Naive thymus-derived CD4-positive, alpha-beta T cell (primary cell): ENCODE measurements at regions of chr4 and their contacts with region 1.

Region 1: DNA sequence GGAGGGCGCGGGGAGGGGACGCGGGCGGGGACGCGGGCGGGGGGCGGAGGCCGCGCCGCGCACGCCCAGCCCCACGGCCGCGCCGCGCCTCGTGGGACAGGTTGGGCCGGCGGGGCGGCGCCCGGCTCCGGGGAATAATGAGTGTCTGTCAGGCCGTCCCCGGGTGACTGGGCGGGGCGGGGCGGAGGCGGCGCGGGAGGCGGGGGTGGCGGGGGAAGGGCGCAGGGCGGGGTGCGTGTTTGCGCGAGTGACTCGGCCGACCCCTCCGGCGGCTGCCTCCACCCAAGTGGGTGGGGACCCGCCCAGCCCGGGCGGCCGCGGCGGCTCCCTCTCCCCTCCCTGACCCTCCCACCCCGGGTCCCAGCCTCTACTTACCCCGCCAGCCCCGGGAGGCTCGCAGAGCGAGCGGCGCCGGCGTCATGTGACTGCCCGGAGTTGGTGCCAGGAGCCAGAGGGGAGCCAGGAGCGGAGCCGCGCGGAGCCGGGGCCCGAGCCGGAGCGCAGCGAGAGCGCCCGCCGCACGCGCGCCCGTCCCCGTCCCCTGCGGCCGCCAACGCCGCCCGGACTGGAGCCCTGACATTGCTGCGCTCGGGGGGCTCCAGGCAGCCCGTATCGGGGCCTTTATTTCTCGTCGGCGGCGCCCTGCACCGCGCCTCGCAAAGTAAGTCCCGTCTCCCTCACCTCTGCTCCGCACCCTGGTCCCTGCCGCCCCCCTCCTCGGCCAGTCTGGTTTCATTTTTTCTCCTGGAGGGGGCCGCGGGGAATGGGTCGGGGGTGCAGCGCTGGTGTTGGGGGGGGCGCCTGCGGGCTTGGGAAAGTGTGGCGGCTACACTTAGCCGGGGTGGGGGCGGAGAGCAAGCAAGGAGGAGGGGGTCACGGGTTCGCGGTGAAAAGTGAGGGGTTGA is at the start of gene KLF3:
- DNase-seq: peak in 7 of 9 donors; percentile 91 to 95 (median 93)
- ATAC-seq: peak; percentile 86
- H3K4me3 ChIP-seq: peak within 1 kb of the TSS; percentile 64
- H3K4me3 Mint-ChIP-seq: peak within 1 kb of the TSS; percentile 85 to 100 (median 99)
- H3K27ac ChIP-seq: peak within 1 kb of the TSS; percentile 98
- H3K27ac Mint-ChIP-seq: peak within 1 kb of the TSS; percentile 85 to 100 (median 95)
- H3K4me1 ChIP-seq: peaks cover 33 to 50% of the 10 kb centered on the region in 2 donors
- H3K4me1 Mint-ChIP-seq: peaks cover 40 to 57% (median 53%) of the 10 kb centered on the region in 7 donors
- H3K27me3 ChIP-seq: no peaks in the 10 kb centered on the region
- H3K27me3 Mint-ChIP-seq: peaks cover 0 to 63% (median 0%) of the 10 kb centered on the region in 5 donors
- total RNA-seq, gene KLF3: 21.0 to 142 (median 132) TPM

Region 2: DNA sequence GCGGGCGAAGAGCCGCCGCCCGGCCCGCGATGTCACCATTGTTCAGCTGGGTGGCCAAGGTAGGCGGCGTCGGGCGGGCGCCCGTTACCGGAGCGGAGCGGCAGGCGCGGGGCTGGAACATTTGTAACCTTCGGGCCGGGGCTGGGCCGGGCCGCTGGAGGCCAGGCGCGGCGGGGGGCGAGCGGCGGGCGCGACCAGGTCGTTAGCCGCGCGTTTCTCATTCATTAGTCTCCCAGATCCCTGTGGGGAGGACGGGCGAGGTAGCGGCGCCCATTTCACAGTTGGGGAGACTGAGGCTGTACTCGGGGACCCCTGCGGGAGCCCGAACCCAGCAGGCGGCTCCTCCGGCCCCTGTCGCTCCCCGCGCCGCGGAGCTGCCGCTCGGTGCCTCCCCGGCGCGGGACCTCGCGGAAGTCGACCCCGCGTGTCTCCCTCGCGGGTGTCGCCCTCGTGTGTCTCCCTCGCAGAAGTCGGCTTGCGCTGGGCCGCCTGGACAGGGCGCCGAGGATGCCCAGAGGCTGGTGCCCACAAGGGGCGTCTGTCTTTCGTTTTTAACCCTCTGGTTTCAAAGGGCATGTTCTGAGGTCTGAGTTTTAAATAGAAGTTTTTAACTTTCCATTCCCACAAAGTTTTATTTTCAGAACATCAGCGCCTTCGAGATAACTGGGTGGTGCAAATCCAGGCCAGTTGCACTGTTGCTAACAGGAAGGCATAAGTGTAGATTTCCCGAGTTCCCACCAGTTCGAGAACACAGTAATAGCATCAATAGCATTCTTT is 686.4 kb before region 1 on chr4:
- CTCF ChIA-PET with region 1: no interaction called
- POLR2A ChIA-PET with region 1: no interaction called
- intact Hi-C with region 1: loop called in 1 of 2 experiments (anchors 2 kb)
- DNase-seq: peak; percentile 56 to 75 (median 70)
- ATAC-seq: peak; percentile 87
- H3K4me3 ChIP-seq: peak overlapping the region; percentile 69
- H3K4me3 Mint-ChIP-seq: peak overlapping the region; percentile 74 to 91 (median 84)
- H3K27ac ChIP-seq: peak overlapping the region; percentile 85
- H3K27ac Mint-ChIP-seq: peak overlapping the region; percentile 51 to 90 (median 78)
- H3K4me1 ChIP-seq: peaks cover 9 to 13% of the 10 kb centered on the region in 2 donors
- H3K4me1 Mint-ChIP-seq: peaks cover 14 to 40% (median 34%) of the 10 kb centered on the region in 7 donors
- H3K27me3 ChIP-seq: no peaks in the 10 kb centered on the region
- H3K27me3 Mint-ChIP-seq: no peaks in the 10 kb centered on the region

Region 3: GRCh38 chr4:38319456-38320342 is 344.4 kb before region 1 on chr4:
- CTCF ChIA-PET with region 1: interaction called, 8 read pairs
- POLR2A ChIA-PET with region 1: interaction called, 59 read pairs
- intact Hi-C with region 1: loop called (anchors 1 to 2 kb)
- DNase-seq: peak; percentile 73 to 96 (median 83)
- ATAC-seq: peak; percentile 91
- H3K4me3 ChIP-seq: peak overlapping the region; percentile 38
- H3K4me3 Mint-ChIP-seq: peak overlapping the region; percentile 80 to 95 (median 88)
- H3K27ac ChIP-seq: peak overlapping the region; percentile 68
- H3K27ac Mint-ChIP-seq: peak overlapping the region; percentile 87 to 98 (median 94)
- H3K4me1 ChIP-seq: peaks cover 19 to 35% of the 10 kb centered on the region in 2 donors
- H3K4me1 Mint-ChIP-seq: peaks cover 33 to 75% (median 70%) of the 10 kb centered on the region in 7 donors
- H3K27me3 ChIP-seq: no peaks in the 10 kb centered on the region
- H3K27me3 Mint-ChIP-seq: peaks cover 0 to 10% (median 0%) of the 10 kb centered on the region in 5 donors

Region 4: DNA sequence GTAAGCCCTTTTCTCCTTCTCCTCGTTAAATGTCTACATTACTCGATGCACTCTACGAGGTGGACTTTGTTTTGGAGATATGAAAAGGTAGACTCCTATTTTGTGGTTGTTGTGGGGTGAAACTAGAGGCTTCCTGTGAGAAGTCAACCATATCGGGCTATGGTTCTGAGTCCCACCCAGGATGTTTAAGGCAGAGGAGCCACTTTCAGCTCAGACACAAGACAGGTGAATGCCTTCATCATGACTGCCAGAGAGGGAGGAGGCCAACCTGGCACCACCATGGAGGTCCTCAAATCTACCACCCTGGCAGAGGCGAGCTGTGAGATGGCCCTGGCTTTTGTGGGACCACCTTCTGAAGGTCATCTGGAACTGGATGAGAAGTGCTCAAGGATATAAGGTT is 154.5 kb before region 1 on chr4:
- CTCF ChIA-PET with region 1: no interaction called
- POLR2A ChIA-PET with region 1: interaction called, 31 read pairs
- intact Hi-C with region 1: loop called (anchors 1 to 5 kb)
- DNase-seq: peak in 8 of 9 donors; percentile 30 to 83 (median 76)
- ATAC-seq: peak; percentile 94
- H3K4me3 ChIP-seq: peak overlapping the region; percentile 61
- H3K4me3 Mint-ChIP-seq: peak overlapping the region; percentile 70 to 94 (median 89)
- H3K27ac ChIP-seq: peak overlapping the region; percentile 74
- H3K27ac Mint-ChIP-seq: peak overlapping the region; percentile 71 to 97 (median 89)
- H3K4me1 ChIP-seq: peaks cover 60 to 64% of the 10 kb centered on the region in 2 donors
- H3K4me1 Mint-ChIP-seq: peaks cover 40 to 94% (median 90%) of the 10 kb centered on the region in 7 donors
- H3K27me3 ChIP-seq: no peaks in the 10 kb centered on the region
- H3K27me3 Mint-ChIP-seq: peaks cover 0 to 51% (median 0%) of the 10 kb centered on the region in 5 donors

Region 5: DNA sequence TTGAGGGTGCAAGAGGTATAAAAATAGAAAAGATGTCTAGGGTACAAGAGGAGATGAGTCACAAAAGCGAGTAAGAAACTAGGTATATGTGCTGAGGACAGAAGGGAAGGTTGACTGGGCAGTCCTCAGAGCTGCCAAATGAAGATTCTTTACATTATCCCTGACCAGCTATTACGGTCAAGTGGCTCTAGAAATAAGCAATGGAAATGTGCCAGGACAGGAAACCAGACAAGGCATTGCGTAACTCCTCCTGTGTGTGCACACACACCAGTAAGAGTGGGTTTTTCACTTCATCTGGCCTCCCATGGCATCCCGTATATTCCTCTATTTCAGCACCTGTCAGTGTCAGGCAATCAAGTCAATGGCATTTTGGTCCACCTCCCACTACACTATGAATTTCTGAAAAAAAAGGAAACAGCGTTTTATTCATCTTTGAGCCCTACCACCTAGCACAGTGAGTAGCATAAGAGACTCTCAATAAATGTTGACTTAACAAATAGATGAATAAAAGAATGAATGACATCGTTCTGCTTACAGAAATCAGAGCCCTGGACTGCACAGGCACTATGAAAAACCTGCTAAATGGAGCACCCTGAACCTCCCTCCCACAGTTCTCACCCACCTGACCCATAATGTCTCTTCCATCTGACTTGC is 62.7 kb before region 1 on chr4:
- CTCF ChIA-PET with region 1: no interaction called
- POLR2A ChIA-PET with region 1: interaction called, 5 read pairs
- intact Hi-C with region 1: loop called in 1 of 2 experiments (anchors 10 kb)
- DNase-seq: no peak
- ATAC-seq: no peak
- H3K4me3 ChIP-seq: no peak overlapping the region
- H3K4me3 Mint-ChIP-seq: no peak overlapping the region
- H3K27ac ChIP-seq: no peak overlapping the region
- H3K27ac Mint-ChIP-seq: peak overlapping the region in 4 of 9 donors; percentile 18 to 27 (median 20)
- H3K4me1 ChIP-seq: peaks cover 5% of the 10 kb centered on the region in 2 donors
- H3K4me1 Mint-ChIP-seq: peaks cover 16 to 40% (median 24%) of the 10 kb centered on the region in 7 donors
- H3K27me3 ChIP-seq: no peaks in the 10 kb centered on the region
- H3K27me3 Mint-ChIP-seq: peaks cover 0 to 10% (median 0%) of the 10 kb centered on the region in 5 donors

Region 6: DNA sequence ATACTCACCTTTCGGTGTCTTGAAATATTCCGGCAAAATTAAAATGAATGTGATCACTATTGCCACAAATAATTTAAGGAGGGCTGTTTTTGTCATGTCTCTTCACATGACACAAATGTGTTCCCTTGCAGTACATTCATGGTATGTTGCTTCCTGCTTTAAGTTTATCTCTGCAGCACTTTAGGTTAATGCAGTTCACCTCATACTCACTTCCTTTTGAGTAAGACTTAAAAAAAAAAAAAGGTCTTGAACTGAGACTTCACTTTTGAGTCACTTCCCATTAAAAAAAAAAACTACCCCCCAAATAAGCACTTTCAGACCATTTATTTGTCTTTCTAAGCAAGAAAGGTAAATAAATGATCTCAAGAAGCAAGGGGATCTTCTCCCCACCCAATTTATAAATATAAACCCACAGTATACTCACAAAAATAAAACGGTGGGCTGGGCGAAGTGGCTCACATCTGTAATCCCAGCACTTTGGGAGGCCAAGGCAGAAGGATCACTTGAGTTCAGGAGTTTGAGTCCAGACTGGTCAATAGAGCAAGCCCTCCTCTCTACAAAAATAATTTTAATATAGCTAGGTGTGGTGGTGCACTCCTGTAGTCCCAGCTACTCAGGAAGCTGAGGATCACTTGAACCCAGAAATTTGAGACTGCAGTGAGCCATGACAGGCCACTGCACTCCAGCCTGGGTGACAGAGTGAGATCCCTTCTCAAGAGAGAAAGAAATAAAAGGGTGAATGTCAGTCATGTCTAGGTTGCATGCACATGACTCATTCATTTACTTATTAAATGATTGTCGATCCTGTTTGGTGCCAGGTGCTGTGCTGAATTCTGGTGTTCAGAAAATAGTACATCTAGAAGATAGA is 368.4 kb after region 1 on chr4 and contains the start of gene TMEM156:
- CTCF ChIA-PET with region 1: no interaction called
- POLR2A ChIA-PET with region 1: no interaction called
- intact Hi-C with region 1: loop called in 1 of 2 experiments (anchors 5 kb)
- DNase-seq: peak in 7 of 9 donors; percentile 59 to 77 (median 70)
- ATAC-seq: peak; percentile 93
- H3K4me3 ChIP-seq: peak within 1 kb of the TSS; percentile 61
- H3K4me3 Mint-ChIP-seq: peak within 1 kb of the TSS; percentile 65 to 89 (median 82)
- H3K27ac ChIP-seq: peak within 1 kb of the TSS; percentile 55
- H3K27ac Mint-ChIP-seq: peak within 1 kb of the TSS; percentile 19 to 93 (median 87)
- H3K4me1 ChIP-seq: peaks cover 29 to 45% of the 10 kb centered on the region in 2 donors
- H3K4me1 Mint-ChIP-seq: peaks cover 16 to 55% (median 44%) of the 10 kb centered on the region in 7 donors
- H3K27me3 ChIP-seq: no peaks in the 10 kb centered on the region
- H3K27me3 Mint-ChIP-seq: no peaks in the 10 kb centered on the region
- total RNA-seq, gene TMEM156: 8.6 to 36.4 (median 9.4) TPM